GM18951 (cell line): ENCODE measurements at regions of chr7 and their contacts with region 1.

Region 1: GRCh38 chr7:75642810-75643486 is 95.8 kb downstream of the HIP1 start:
- POLR2A ChIP-seq: no peak

Region 2: GRCh38 chr7:73960548-73960947 is 1682.4 kb before region 1 on chr7:
- in situ Hi-C with region 1: no loop called
- POLR2A ChIP-seq: no peak

Region 3: GRCh38 chr7:75066521-75066920 is 576.4 kb before region 1 on chr7:
- in situ Hi-C with region 1: no loop called
- POLR2A ChIP-seq: no peak

Region 4: DNA sequence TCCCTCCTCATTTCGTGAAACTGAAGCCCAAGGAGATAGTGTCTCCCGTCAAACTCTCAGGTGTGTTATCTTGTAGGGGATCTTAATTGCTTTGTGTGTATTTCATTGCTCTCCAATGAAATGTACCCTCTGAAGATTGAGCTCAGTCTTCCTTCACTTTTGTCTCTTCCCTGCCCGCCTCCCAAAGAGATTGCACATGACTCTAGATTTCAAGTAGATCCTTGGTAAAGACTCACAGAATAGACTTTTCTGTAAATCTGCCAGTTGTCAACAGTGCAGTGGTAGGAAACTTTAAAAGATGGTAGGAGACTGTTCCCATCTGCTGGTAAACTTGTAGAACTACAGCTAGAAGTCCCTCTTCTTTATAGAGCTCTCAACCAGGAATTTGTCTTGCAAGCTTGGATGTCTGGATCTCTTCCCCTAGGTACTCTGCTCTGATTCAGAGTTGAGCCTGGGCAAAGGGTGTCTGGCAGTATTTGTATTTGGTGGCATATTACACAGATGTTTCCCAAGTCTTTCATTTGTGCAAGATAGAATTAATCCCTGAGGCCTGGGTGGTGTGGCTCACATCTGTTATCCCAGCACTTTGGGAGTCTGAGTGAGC is 119.5 kb after region 1 on chr7:
- in situ Hi-C with region 1: loop called (anchors 5 kb)
- POLR2A ChIP-seq: no peak